ENCODE measurements at regions of chr5 and their contacts with region 1.

Region 1: DNA sequence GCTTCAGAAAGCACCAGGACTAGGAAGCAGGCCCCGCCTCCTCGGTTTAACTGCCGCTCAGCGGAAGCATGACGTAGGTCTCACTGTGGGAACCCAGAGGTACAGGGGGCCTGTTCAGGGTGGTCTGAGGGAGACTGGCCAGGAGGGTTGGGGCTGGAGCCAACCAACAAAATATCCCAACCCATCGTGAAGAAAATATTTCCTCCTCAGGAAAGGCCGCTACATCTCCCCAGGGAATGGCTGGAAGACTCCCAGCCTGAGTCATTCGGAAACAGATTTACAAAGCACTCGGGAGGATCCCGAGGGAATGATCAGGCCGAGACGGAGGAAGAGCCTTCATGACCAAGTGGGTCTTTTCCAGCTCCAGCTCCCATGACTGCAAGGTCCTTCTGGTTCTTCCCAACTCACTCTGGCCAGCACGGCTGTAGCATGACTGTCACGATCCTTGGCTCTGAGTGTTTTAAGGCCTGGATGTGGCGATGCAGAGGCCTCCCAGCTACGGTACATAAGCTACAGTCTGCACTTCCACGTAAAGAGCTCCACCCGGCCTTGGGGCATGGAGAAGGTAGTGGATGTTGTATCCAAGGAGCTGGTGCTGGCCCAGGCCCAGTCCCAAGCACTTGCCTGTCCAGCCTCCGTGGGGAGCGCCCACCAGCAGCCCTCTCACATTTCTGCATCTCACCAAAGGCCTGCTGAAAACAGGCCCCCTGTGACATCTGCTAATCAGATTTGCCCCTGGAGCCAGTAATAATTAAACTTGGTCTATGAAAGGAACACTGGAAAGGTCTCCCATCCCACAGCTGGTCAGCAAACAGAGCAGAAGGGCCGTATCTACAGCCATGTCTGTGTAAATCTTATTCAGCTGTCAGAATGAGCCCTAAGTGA is 100.6 kb downstream of the LHFPL2 start:
- DNase-seq: peak; percentile 84 to 96
- ATAC-seq: peak; percentile 90 to 95 (median 92)
- H3K4me3 ChIP-seq: peak overlapping the region in 1 of 10 donors; percentile 22
- H3K27ac ChIP-seq: peak overlapping the region; percentile 60 to 90 (median 84)
- H3K4me1 ChIP-seq: peaks cover 11 to 79% (median 54%) of the 10 kb centered on the region in 9 donors
- H3K27me3 ChIP-seq: no peaks in the 10 kb centered on the region
- CTCF ChIP-seq: no peak

Region 2: GRCh38 chr5:78162253-78162862 is 385.6 kb before region 1 on chr5:
- intact Hi-C with region 1: no loop called
- DNase-seq: no peak
- ATAC-seq: no peak
- H3K4me3 ChIP-seq: no peak overlapping the region
- H3K27ac ChIP-seq: no peak overlapping the region
- H3K4me1 ChIP-seq: no peaks in the 10 kb centered on the region
- H3K27me3 ChIP-seq: no peaks in the 10 kb centered on the region
- CTCF ChIP-seq: peak in 8 of 9 donors; percentile 9 to 61 (median 49)

Region 3: GRCh38 chr5:78594610-78595457 is 46.9 kb after region 1 on chr5:
- intact Hi-C with region 1: loop called in 2 of 10 experiments (anchors 5 to 10 kb)
- DNase-seq: peak in 1 of 2 donors; percentile 43
- ATAC-seq: peak; percentile 65 to 84 (median 80)
- H3K4me3 ChIP-seq: no peak overlapping the region
- H3K27ac ChIP-seq: peak overlapping the region in 7 of 10 donors; percentile 44 to 72 (median 57)
- H3K4me1 ChIP-seq: peaks cover 3 to 78% (median 60%) of the 10 kb centered on the region in 9 donors
- H3K27me3 ChIP-seq: no peaks in the 10 kb centered on the region
- CTCF ChIP-seq: no peak

Region 4: GRCh38 chr5:78648359-78649210 is 100.6 kb after region 1 on chr5 and contains the start of gene LHFPL2:
- intact Hi-C with region 1: loop called in 6 of 10 experiments (anchors 5 to 10 kb)
- DNase-seq: peak; percentile 72 to 82
- ATAC-seq: peak; percentile 74 to 92 (median 84)
- H3K4me3 ChIP-seq: peak within 1 kb of the TSS; percentile 70 to 89 (median 80)
- H3K27ac ChIP-seq: peak within 1 kb of the TSS; percentile 76 to 96 (median 94)
- H3K4me1 ChIP-seq: peaks cover 0 to 41% (median 20%) of the 10 kb centered on the region in 9 donors
- H3K27me3 ChIP-seq: peaks cover 0 to 28% (median 0%) of the 10 kb centered on the region in 7 donors
- CTCF ChIP-seq: no peak
- total RNA-seq, gene LHFPL2: 3.8 to 14.9 (median 5.1) TPM

Region 5: DNA sequence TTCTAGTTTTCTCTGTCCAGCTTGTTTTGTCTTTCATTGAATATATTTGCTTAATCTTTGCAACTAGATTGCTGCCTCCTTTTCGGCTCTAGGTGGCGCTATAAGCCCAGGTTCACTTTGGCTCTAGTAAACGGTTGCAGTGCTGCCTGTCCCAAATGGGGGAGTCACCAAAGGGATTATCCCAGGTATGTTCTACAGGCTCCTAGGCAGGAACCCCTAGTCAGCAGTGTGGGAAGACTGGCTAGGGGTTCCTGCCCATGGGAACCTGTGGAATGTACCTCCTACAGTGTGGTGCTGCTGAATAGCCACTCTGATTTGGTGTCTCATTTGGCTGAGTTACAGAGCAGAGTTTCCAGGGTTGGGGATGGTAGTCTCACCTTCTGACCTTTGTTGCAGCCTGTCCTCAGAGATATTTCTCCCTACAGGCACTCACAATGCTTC is 352.0 kb after region 1 on chr5:
- intact Hi-C with region 1: loop called in 4 of 10 experiments (anchors 10 kb)
- DNase-seq: peak in 1 of 2 donors; percentile 43
- ATAC-seq: no peak
- H3K4me3 ChIP-seq: no peak overlapping the region
- H3K27ac ChIP-seq: no peak overlapping the region
- H3K4me1 ChIP-seq: peaks cover 0 to 11% (median 2%) of the 10 kb centered on the region in 9 donors
- H3K27me3 ChIP-seq: no peaks in the 10 kb centered on the region
- CTCF ChIP-seq: peak; percentile 34 to 75 (median 61)

Region 6: DNA sequence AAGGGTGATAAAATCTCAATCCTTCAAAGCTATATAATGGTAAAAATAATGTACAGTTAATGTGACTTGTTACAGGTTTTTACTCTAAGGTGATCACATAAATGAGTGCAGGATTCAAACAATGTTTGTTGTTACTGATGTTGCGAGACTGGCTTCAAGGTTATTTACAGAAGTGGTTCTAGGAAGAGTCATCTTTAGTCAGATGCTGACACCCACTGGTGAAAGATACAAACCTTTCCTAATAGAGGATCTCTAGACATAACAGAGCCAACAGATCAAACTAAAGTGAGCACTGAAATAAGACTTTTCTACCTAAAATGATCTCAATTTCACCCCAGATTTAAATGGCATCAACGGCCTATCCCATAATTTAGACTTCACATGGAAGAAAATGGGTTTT is 416.9 kb after region 1 on chr5:
- intact Hi-C with region 1: loop called in 1 of 10 experiments (anchors 10 kb)
- DNase-seq: peak in 1 of 2 donors; percentile 41
- ATAC-seq: peak; percentile 69 to 90 (median 81)
- H3K4me3 ChIP-seq: no peak overlapping the region
- H3K27ac ChIP-seq: no peak overlapping the region
- H3K4me1 ChIP-seq: no peaks in the 10 kb centered on the region
- H3K27me3 ChIP-seq: no peaks in the 10 kb centered on the region
- CTCF ChIP-seq: peak; percentile 8 to 76 (median 55)